Spleen (tissue), 13 donors: ENCODE measurements at regions of chr18 and their contacts with region 1.

Region 1: GRCh38 chr18:864872-865273 is 39.8 kb upstream of the ADCYAP1 start:
- DNase-seq: peak; percentile 82
- H3K4me3 ChIP-seq: no peak overlapping the region
- H3K27ac ChIP-seq: no peak overlapping the region
- H3K4me1 ChIP-seq: peaks cover 0 to 7% (median 1%) of the 10 kb centered on the region in 6 donors
- H3K27me3 ChIP-seq: peaks cover 0 to 47% (median 0%) of the 10 kb centered on the region in 7 donors
- CTCF ChIP-seq: peak; percentile 51 to 86 (median 72)
- POLR2A ChIP-seq: no peak

Region 2: DNA sequence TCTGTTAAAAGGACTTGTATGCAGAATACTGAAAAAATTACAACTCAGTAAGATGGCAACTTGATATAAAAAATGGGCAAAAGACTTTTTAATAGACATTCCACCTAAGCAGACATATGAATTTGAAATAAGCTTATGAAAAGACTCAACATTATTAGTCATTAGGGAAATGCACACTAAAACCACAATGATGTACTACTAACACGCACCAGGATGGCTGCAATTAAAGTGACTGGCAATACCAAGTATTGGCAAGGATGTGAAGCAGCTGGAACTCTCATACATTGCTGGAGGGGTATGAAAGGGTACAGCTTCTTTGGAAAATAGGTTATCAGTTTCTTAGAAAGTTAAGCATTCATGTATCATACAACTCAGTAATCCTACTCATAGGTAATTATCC is 149.2 kb before region 1 on chr18:
- intact Hi-C with region 1: no loop called
- DNase-seq: no peak
- H3K4me3 ChIP-seq: no peak overlapping the region
- H3K27ac ChIP-seq: no peak overlapping the region
- H3K4me1 ChIP-seq: peaks cover 0 to 21% (median 13%) of the 10 kb centered on the region in 6 donors
- H3K27me3 ChIP-seq: peaks cover 0 to 14% (median 0%) of the 10 kb centered on the region in 7 donors
- CTCF ChIP-seq: no peak
- POLR2A ChIP-seq: no peak

Region 3: GRCh38 chr18:961644-962355 is 96.9 kb after region 1 on chr18:
- intact Hi-C with region 1: loop called (anchors 5 kb)
- DNase-seq: no peak
- H3K4me3 ChIP-seq: peak overlapping the region in 3 of 8 donors; percentile 3 to 48 (median 31)
- H3K27ac ChIP-seq: peak overlapping the region in 3 of 8 donors; percentile 27 to 42 (median 30)
- H3K4me1 ChIP-seq: peaks cover 0 to 10% (median 0%) of the 10 kb centered on the region in 6 donors
- H3K27me3 ChIP-seq: peaks cover 0 to 15% (median 0%) of the 10 kb centered on the region in 7 donors
- CTCF ChIP-seq: peak in 10 of 11 experiments; percentile 47 to 92 (median 70)
- POLR2A ChIP-seq: no peak